ENCODE measurements at regions of chr10 and their contacts with region 1.

Region 1: DNA sequence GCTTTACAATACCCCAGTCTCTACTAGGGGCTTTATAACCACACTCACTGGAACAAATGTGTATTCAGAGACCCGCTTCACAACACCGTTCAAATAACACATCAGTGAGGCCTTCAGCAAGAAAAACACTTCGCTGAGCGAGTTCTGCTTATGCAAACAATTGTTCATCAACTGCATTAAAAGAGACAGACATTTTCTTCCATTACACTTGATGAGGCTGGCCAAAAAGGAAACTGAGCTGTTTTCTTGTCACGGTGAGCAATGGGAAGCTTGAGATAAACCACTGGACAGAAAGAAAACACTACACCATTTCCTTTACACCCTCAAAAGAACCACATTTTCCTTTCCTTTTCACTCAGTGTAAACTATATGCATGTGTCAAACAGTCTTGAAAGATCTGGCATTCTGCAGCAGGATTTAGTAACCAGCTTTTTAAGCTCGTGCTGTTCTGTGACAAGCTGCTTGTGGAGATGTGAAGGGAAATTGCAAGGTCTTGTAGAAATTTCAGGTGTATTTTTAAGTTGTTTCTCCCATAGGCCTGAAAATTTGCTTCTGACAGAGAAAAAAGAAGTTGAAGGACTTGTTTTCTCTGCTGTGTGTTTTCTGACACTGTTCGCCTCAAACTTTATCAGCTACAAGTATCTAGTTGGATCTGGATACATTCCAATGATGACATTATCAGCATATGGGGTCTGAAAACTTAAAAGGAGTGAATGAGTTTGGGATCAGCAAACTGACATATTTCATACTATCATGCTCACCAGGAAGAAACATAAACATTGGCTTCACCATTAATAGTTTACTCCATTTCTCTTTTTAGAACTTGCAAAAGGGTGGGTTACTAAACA is 693.1 kb downstream of the PARD3 start:
- DNase-seq: peak; percentile 31
- ATAC-seq: peak; percentile 93
- H3K4me3 Mint-ChIP-seq: no peak overlapping the region
- H3K27ac Mint-ChIP-seq: no peak overlapping the region
- H3K4me1 Mint-ChIP-seq: peaks cover 23% of the 10 kb centered on the region
- H3K27me3 Mint-ChIP-seq: no peaks in the 10 kb centered on the region

Region 2: DNA sequence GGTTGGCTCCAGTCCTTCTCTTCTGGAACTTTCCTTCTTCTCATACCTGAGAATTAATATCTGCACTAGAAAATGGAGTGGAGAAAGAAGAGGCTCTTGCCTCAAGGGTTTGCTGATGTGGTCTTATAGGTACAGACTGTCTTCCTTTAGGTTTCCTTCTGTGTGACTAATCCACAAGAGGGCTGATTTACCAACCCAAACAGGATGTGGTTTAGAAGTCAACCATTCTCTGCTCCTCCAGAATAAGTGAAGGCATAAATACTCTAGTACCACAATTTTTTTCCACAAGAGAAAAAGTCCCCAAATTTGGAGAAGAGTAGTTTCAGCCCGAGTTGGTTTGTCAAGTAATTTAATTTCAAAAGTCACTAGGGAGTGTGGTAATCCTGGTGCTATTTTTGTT is 873.4 kb before region 1 on chr10:
- CTCF ChIA-PET with region 1: no interaction called
- POLR2A ChIA-PET with region 1: no interaction called
- intact Hi-C with region 1: loop called (anchors 5 kb)
- DNase-seq: peak; percentile 30
- ATAC-seq: peak; percentile 83
- H3K4me3 Mint-ChIP-seq: no peak overlapping the region
- H3K27ac Mint-ChIP-seq: peak overlapping the region; percentile 39
- H3K4me1 Mint-ChIP-seq: peaks cover 71% of the 10 kb centered on the region
- H3K27me3 Mint-ChIP-seq: peaks cover 12% of the 10 kb centered on the region

Region 3: GRCh38 chr10:33265621-33266020 is 856.4 kb before region 1 on chr10:
- CTCF ChIA-PET with region 1: no interaction called
- POLR2A ChIA-PET with region 1: no interaction called
- intact Hi-C with region 1: loop called in 1 of 2 experiments (anchors 2 kb)
- DNase-seq: peak; percentile 84
- ATAC-seq: peak; percentile 47
- H3K4me3 Mint-ChIP-seq: no peak overlapping the region
- H3K27ac Mint-ChIP-seq: no peak overlapping the region
- H3K4me1 Mint-ChIP-seq: peaks cover 22% of the 10 kb centered on the region
- H3K27me3 Mint-ChIP-seq: peaks cover 29% of the 10 kb centered on the region

Region 4: DNA sequence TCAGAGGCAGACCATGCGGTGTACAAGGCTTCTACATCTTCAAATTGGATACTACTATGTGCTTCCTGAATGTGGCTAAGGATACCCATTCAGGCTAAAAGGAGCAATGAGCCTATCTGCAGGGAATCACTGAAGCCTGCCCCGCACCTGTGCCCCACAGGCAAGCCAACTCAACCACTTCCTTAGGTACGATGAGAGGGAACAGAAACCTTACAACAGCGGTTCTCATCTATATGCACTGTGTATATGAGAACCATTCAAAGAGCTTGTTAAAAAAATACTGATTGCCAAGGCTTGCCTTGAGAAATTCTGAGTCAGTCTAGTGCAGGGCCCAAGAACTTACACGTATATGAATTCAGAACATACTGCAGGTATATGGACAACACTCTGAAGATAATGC is 13.5 kb after region 1 on chr10:
- CTCF ChIA-PET with region 1: no interaction called
- POLR2A ChIA-PET with region 1: no interaction called
- intact Hi-C with region 1: no loop called
- DNase-seq: no peak
- ATAC-seq: no peak
- H3K4me3 Mint-ChIP-seq: no peak overlapping the region
- H3K27ac Mint-ChIP-seq: no peak overlapping the region
- H3K4me1 Mint-ChIP-seq: no peaks in the 10 kb centered on the region
- H3K27me3 Mint-ChIP-seq: peaks cover 6% of the 10 kb centered on the region

Region 5: GRCh38 chr10:34280599-34281374 is 158.8 kb after region 1 on chr10:
- CTCF ChIA-PET with region 1: no interaction called
- POLR2A ChIA-PET with region 1: no interaction called
- intact Hi-C with region 1: loop called (anchors 5 kb)
- DNase-seq: peak; percentile 28
- ATAC-seq: peak; percentile 80
- H3K4me3 Mint-ChIP-seq: no peak overlapping the region
- H3K27ac Mint-ChIP-seq: peak overlapping the region; percentile 72
- H3K4me1 Mint-ChIP-seq: peaks cover 25% of the 10 kb centered on the region
- H3K27me3 Mint-ChIP-seq: peaks cover 5% of the 10 kb centered on the region